AG04449 (cell line): ENCODE measurements at regions of chr16 and their contacts with region 1.

Region 1: GRCh38 chr16:53789137-53789536 is 85.2 kb downstream of the FTO start:
- DNase-seq: peak; percentile 88
- H3K4me3 ChIP-seq: no peak overlapping the region
- CTCF ChIP-seq: no peak

Region 2: DNA sequence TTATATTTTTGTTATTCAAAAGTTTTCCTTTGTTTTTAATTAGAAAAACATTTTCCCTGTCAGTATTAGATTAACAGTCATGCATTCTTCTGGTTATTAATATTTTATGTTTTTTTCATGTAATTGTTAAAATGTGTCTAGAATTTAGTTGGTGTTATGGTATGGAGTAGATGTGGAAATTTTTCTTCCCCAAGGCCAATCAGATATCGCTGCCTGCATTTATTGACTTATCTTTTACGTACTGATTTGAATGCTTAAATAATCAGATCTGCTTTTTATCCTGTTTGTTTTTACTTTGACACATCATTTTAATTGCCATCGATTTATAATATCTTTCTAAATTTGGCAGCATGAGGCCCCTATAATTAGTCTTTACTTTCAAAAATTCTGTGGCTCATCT is 71.6 kb before region 1 on chr16:
- CTCF ChIA-PET with region 1: no interaction called
- POLR2A ChIA-PET with region 1: no interaction called
- DNase-seq: no peak
- H3K4me3 ChIP-seq: no peak overlapping the region
- CTCF ChIP-seq: no peak

Region 3: DNA sequence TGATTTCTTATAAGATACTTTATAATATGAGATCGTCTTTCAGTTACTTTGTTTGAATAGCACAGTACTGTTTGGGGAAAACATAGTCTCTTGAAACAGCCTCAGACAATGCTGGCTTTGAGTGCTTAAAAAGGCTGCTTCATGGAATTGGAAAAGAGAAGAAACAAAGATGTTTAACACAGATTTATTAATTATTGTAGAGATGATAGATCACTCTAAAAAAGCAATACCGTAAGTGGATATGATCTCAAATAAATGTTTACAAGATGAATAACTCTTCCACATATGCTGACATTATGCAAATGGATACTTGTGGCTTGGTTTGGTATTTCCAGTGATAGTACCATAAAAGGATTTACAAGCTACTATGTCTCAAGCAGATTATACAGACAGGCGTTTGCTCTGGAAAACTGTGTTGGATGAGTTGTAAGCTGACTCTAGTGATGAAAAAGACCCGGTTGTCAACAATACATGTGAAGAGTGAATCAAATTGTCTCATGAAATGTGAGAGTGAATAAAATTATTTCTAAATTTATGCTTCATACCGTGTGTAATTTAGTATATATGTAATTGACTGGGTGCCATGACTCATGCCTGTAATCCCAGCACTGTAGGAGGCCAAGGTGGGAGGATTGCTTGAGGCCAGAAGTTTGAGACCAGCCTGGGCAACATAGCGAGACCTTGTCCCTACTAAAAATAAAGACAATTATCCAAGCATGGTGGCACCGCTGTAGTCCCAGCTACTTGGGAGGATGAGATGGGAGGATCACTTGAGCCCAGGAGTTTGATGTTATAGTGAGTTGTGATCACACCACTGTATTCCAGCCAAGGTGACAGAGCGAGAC is 20.2 kb after region 1 on chr16:
- CTCF ChIA-PET with region 1: interaction called, 10 read pairs
- POLR2A ChIA-PET with region 1: no interaction called
- DNase-seq: peak; percentile 83
- H3K4me3 ChIP-seq: no peak overlapping the region
- CTCF ChIP-seq: no peak